ENCODE measurements at regions of chrX and their contacts with region 1.

Region 1: DNA sequence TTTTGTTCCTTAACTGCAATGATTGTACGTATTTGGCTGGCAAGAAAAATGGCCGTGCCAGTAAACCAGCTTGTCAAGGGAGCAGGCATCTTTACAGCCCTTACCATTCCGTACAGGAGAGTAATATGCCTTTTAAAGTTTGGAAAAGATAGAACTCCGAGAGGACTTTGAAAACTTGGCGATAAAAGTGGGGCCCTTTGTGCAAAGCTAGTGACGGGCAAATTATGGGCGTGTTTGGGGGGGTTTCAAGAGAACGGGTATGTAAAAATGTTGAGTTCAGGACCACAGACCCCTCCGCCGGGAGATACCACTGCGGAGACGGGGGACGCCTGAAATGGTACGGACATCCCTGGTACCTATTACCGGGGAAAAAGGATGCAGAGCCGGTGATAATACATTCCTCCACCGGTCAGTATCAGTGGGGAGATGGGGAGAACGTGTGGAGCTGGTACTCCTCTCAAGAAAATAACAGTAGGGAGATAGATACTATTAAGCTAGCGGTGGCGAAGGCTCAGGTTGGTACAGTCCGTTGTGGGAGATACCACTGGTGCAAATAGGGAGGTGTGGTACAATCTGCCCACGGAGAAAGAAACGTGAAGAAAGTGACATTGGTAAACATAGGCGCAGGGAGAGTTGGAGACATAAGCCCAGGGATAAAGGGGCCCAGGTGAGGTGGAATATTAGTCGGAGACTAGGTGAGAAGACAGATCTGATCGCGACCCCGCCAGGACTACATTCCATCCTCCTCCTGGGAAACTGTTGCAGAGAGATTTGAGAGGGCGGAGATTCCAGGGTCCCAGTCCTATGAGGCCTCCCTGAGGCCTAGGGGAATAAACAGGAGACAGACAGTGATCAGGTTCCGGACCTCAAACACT is 14.5 kb downstream of the SPACA5 start:
- DNase-seq: peak; percentile 76
- H3K4me3 ChIP-seq: peak overlapping the region; percentile 49 to 58 (median 56)
- H3K27ac ChIP-seq: peak overlapping the region; percentile 88
- H3K4me1 ChIP-seq: no peaks in the 10 kb centered on the region
- H3K27me3 ChIP-seq: no peaks in the 10 kb centered on the region
- CTCF ChIP-seq: no peak

Region 2: GRCh38 chrX:47650164-47651042 is 370.9 kb before region 1 on chrX and contains the start of gene ELK1:
- CTCF ChIA-PET with region 1: no interaction called
- dilution Hi-C with region 1: no loop called
- in situ Hi-C with region 1: loop called in 1 of 2 experiments (anchors 25 kb)
- intact Hi-C with region 1: loop called (anchors 10 kb)
- DNase-seq: peak; percentile 97
- H3K4me3 ChIP-seq: peak within 1 kb of the TSS; percentile 52 to 77 (median 68)
- H3K27ac ChIP-seq: peak within 1 kb of the TSS; percentile 36
- H3K4me1 ChIP-seq: peaks cover 14% of the 10 kb centered on the region
- H3K27me3 ChIP-seq: no peaks in the 10 kb centered on the region
- CTCF ChIP-seq: no peak
- total RNA-seq, gene ELK1: 17.2 to 44.7 TPM

Region 3: DNA sequence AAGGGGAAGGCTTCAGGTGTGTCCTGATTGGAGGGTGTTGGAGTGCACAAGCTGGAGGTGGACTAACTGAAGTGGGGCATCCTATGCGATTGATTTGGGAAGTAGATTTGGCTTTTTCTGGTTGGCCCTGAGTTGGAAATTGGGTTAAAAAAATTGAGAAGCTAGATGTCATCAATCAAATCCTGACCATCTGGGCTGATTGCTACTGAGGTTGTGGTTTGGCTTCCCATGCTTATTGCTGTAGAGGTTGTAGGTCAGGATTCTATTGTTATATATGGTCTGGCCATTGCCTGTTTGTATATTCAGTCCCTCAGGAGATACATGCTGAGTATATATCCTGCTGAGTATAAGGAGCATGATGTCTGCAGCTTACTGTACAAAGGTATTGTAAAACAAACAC is 192.3 kb before region 1 on chrX:
- CTCF ChIA-PET with region 1: no interaction called
- dilution Hi-C with region 1: no loop called
- in situ Hi-C with region 1: loop called in 1 of 2 experiments (anchors 10 kb)
- intact Hi-C with region 1: loop called (anchors 1 kb)
- DNase-seq: no peak
- H3K4me3 ChIP-seq: no peak overlapping the region
- H3K27ac ChIP-seq: no peak overlapping the region
- H3K4me1 ChIP-seq: no peaks in the 10 kb centered on the region
- H3K27me3 ChIP-seq: no peaks in the 10 kb centered on the region
- CTCF ChIP-seq: no peak

Region 4: DNA sequence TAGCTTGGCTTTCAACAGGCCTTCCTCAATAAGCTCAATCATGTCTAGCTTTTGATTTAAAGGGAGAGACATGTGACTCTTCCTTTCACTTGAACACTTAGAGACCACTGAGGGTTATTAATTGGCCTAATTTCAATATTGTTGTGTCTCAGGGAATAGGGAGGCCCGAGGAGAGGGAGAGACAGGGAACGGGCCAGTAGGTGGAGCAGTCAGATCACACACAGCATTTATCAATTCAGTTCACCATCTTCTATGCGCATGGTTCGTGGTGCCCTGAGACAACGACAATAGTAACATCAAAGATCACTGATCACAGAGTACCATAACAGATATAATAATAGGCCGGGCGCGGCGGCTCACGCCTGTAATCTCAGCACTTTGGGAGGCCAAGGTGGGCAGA is 166.8 kb before region 1 on chrX:
- CTCF ChIA-PET with region 1: no interaction called
- dilution Hi-C with region 1: no loop called
- in situ Hi-C with region 1: loop called in 1 of 2 experiments (anchors 10 kb)
- intact Hi-C with region 1: no loop called
- DNase-seq: peak; percentile 14
- H3K4me3 ChIP-seq: no peak overlapping the region
- H3K27ac ChIP-seq: no peak overlapping the region
- H3K4me1 ChIP-seq: no peaks in the 10 kb centered on the region
- H3K27me3 ChIP-seq: no peaks in the 10 kb centered on the region
- CTCF ChIP-seq: peak; percentile 4 to 41

Region 5: GRCh38 chrX:47991263-47992092 is 29.8 kb before region 1 on chrX:
- CTCF ChIA-PET with region 1: no interaction called
- dilution Hi-C with region 1: no loop called
- in situ Hi-C with region 1: no loop called
- intact Hi-C with region 1: loop called (anchors 2 kb)
- DNase-seq: peak; percentile 80
- H3K4me3 ChIP-seq: no peak overlapping the region
- H3K27ac ChIP-seq: peak overlapping the region; percentile 38
- H3K4me1 ChIP-seq: peaks cover 13% of the 10 kb centered on the region
- H3K27me3 ChIP-seq: no peaks in the 10 kb centered on the region
- CTCF ChIP-seq: no peak

Region 6: DNA sequence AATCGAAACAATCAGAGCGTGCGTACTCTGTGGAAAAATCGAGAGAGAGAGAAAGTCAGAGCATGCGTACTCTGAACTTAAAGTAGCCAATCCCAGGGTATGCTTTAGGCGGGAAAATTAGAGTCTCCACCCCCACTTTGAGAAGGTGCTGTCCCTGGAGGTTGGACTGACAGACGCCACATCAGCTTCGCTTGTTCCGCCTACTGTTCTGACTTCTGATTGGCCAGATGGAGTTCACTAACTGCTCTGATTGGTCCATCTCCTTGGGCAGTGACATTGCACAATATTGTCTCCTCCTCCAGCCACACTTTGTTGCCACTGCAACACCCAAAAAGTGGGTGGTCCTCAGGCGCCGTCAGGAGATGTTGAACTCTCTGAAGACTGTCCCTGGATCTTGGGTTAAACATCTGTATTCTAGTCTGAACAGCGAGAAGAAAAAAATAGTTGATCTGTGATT is 175.5 kb after region 1 on chrX and contains the start of gene SSX5:
- CTCF ChIA-PET with region 1: no interaction called
- dilution Hi-C with region 1: no loop called
- in situ Hi-C with region 1: no loop called
- intact Hi-C with region 1: no loop called
- DNase-seq: no peak
- H3K4me3 ChIP-seq: no peak within 1 kb of the TSS
- H3K27ac ChIP-seq: no peak within 1 kb of the TSS
- H3K4me1 ChIP-seq: no peaks in the 10 kb centered on the region
- H3K27me3 ChIP-seq: no peaks in the 10 kb centered on the region
- CTCF ChIP-seq: no peak
- total RNA-seq, gene SSX5: not detected

Measured in mammary epithelial cell (primary cell).